Transverse colon (tissue), 4 donors: ENCODE measurements at regions of chr1 and their contacts with region 1.

Region 1: GRCh38 chr1:179365320-179366092 is at the start of gene AXDND1:
- DNase-seq: peak; percentile 89
- H3K4me3 ChIP-seq: peak within 1 kb of the TSS; percentile 46 to 89 (median 60)
- H3K27ac ChIP-seq: peak within 1 kb of the TSS; percentile 89 to 99 (median 90)
- H3K4me1 ChIP-seq: peaks cover 0 to 10% (median 4%) of the 10 kb centered on the region in 4 donors
- H3K27me3 ChIP-seq: no peaks in the 10 kb centered on the region
- CTCF ChIP-seq: no peak
- EP300 ChIP-seq: no peak
- POLR2A ChIP-seq: peak; percentile 57
- total RNA-seq, gene AXDND1: 3.1 to 8.4 (median 4.0) TPM

Region 2: DNA sequence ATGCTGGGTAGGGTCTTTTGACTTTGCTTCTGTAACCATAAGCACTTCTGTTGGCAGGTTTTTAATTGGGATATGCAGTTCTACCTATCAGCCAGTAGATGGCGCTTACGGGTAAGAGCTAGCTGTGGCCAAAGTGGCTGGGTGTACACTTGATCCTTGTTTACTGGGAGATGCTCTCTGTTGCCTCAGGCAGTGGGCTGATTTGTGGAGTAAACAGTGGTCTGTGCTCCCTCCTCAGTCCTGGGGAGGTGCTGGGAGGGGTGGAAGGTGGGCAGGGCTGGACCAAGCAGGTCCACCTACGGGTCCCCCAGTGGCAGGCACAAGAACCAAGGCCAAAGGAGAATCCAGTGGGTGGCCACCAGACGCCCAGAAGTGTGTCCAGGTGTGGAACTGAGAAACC is 597.1 kb before region 1 on chr1:
- in situ Hi-C with region 1: loop called in 1 of 4 experiments (anchors 25 kb)
- intact Hi-C with region 1: no loop called
- DNase-seq: no peak
- H3K4me3 ChIP-seq: no peak overlapping the region
- H3K27ac ChIP-seq: no peak overlapping the region
- H3K4me1 ChIP-seq: no peaks in the 10 kb centered on the region
- H3K27me3 ChIP-seq: no peaks in the 10 kb centered on the region
- CTCF ChIP-seq: peak; percentile 43 to 67 (median 55)
- EP300 ChIP-seq: no peak
- POLR2A ChIP-seq: no peak

Region 3: DNA sequence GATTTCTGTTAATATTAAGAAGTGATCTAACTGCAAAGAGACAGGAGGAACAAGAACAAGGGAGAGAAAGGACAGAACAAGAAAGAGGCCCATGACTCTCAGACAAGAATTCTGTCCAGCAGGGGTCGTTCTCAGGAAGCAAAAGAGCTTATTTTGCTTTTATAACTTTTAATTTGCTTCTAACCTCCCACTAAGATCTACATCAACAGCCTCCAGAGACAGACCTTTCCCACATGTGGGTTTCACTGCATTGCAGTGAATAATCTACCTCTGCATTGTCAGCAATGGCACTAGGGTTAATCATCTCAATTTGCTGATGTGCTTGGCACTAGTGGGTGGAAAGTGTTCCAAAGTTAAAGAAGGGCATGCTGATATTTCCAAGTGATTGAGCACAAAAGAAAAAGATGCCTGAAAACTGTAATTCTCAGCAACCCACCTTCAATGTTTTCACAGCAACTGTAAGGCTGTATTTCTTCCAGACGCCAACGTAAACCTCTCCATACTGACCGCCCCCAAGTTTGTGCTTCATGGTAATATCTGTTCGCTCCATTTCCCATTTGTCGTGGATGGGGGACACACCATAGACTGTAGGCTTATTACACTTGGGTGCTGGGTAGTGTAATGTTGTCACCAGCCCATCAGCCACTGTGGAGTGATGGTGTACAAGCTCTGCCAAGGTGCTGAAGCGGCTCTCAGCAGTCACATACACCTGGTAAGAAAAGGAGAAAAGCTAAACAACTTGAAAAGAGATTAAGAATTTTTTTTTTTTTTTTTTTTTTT is 244.2 kb before region 1 on chr1:
- in situ Hi-C with region 1: loop called in 1 of 4 experiments (anchors 10 kb)
- intact Hi-C with region 1: no loop called
- DNase-seq: peak; percentile 35
- H3K4me3 ChIP-seq: no peak overlapping the region
- H3K27ac ChIP-seq: peak overlapping the region in 1 of 4 donors; percentile 7
- H3K4me1 ChIP-seq: peaks cover 0 to 13% (median 8%) of the 10 kb centered on the region in 4 donors
- H3K27me3 ChIP-seq: no peaks in the 10 kb centered on the region
- CTCF ChIP-seq: peak; percentile 50 to 61 (median 56)
- EP300 ChIP-seq: no peak
- POLR2A ChIP-seq: no peak

Region 4: GRCh38 chr1:179241523-179242097 is 123.9 kb before region 1 on chr1:
- in situ Hi-C with region 1: loop called in 3 of 4 experiments (anchors 10 to 25 kb)
- intact Hi-C with region 1: no loop called
- DNase-seq: no peak
- H3K4me3 ChIP-seq: no peak overlapping the region
- H3K27ac ChIP-seq: no peak overlapping the region
- H3K4me1 ChIP-seq: no peaks in the 10 kb centered on the region
- H3K27me3 ChIP-seq: no peaks in the 10 kb centered on the region
- CTCF ChIP-seq: no peak
- EP300 ChIP-seq: no peak
- POLR2A ChIP-seq: no peak